Right ventricle myocardium inferior (tissue), 1 donor: ENCODE measurements at regions of chr10 and their contacts with region 1.

Region 1: DNA sequence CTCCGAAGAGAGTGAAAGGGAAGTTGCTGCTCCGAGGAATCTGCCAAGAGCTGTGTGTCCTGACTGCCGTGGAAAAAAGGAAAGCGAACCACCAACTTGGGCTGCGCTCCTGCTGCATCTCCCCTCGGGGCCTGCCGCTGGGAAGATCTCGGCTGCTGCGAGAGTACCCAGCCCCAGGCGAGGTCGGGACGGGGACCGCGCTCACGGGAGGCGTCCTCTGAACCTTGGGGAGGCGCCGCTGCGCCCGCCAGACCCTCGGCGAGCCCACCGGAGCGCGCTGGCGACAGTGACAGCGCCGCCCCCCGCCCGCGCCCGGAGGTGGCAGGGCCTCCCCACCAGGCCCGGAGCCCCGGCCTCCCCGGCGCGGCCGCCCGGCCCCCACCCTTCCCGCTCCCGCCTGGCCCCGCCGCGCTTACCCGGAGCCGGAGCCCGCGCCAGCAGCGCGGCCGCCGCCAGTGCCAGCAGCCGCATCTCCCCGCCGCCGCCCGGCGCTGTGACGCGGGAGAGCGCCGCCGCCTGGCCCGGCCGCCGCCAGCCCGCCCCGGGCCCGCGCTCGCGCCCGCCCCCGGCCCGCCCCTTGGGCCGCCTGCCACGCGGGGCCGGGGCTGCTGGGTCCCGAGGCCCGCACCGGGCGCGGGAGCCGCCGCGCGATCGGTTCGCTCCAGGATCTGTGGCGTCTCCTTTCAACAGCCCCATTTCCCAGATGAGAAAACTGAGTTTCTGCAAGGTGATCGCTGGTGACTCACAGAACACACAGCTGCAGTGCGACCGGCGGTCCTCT is at the start of gene VSTM4:
- DNase-seq: peak; percentile 72
- ATAC-seq: peak; percentile 62
- total RNA-seq, gene VSTM4: 21.8 TPM

Region 2: DNA sequence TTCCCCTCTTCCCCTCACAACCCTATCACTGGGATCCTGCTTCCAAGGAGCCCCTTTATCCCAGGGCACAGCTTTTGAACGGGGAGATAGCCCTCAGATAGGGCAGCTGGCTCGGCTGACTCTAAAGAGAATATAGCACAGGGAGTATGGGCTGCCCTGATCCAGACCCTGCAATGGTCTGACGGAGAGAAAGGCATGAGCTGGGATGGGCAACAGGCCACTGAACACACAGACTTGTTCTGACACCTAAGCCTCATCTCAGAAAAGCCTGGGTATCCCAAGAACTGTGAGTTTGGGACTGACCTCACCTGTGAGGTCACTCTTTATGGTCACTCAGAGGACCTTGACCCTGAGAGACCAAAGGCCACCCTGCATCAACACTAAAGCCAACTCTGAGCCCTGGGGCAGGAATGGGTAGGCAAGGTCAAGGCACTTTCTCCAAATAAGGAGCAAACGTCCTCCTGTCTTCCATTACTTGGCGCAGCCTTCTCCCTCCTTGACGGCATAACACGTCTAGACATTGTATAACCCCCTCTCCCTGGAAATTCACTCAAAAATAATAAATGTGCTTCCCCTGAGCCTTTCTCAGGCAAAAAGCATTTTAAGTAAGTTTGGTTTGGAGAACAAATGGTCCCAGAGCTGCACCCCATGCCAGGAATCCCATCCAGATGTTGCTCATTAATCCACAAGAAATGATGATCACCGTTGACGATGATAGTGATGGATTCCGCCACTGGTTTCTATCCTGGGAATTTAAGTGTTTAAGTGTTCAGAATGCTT is 167.3 kb before region 1 on chr10:
- intact Hi-C with region 1: no loop called
- DNase-seq: no peak
- ATAC-seq: no peak

Region 3: GRCh38 chr10:48981310-48981907 is 133.8 kb before region 1 on chr10:
- intact Hi-C with region 1: loop called (anchors 5 kb)
- DNase-seq: no peak
- ATAC-seq: peak; percentile 86

Region 4: GRCh38 chr10:49009199-49009979 is 105.8 kb before region 1 on chr10:
- intact Hi-C with region 1: loop called (anchors 2 kb)
- DNase-seq: no peak
- ATAC-seq: peak; percentile 40

Region 5: DNA sequence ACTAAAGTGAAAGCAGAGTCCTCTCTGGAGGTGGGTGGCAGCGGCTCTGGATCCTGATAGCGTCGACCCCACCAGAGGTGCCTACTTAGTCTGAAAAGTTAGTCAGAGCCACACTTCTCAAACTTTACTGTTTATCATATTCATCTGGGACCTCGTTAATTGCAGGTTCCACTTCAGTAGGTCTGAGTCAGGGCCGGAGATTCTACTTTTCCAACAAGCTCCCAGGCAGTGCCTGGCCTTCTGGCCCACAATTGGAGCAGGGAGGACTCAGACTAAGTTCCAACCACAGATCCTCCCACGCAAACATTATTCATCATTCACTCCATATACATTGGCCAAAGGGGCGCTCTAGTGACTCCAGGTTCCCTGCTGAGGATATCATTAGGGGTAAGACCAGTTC is 78.0 kb before region 1 on chr10:
- intact Hi-C with region 1: no loop called
- DNase-seq: no peak
- ATAC-seq: no peak

Region 6: DNA sequence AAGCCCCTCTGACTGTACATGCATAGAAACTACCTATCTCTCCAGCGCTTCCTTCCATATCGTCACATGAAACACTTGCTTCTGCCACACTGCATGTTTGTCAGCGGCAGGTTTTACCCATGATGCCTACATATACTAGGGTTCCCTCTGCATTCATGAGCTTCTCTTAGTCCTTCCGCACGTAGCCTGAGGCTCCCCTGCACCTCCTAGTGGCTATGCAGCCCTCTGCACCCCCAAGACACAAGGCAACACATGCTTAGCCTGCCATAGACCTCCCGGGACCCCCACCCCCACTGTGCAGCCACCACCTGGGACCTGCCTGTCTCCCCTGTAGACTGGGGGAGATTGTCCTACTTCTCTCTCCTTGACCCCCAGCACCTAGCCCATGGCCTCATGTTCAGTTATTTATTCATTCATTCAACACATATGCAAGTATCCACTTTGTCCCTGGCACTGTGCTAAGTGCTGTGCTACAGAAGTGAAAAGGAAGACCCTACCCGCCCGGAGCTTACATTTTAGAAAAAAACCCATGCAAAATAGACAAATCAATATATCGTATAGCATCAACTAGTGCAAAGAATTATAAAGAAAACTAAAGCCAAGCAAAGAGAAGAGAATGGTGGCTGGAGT is 49.5 kb after region 1 on chr10:
- intact Hi-C with region 1: loop called (anchors 5 kb)
- DNase-seq: no peak
- ATAC-seq: peak; percentile 49

Region 7: GRCh38 chr10:49242604-49243003 is 127.4 kb after region 1 on chr10:
- intact Hi-C with region 1: no loop called
- DNase-seq: peak; percentile 75
- ATAC-seq: peak; percentile 78

Region 8: DNA sequence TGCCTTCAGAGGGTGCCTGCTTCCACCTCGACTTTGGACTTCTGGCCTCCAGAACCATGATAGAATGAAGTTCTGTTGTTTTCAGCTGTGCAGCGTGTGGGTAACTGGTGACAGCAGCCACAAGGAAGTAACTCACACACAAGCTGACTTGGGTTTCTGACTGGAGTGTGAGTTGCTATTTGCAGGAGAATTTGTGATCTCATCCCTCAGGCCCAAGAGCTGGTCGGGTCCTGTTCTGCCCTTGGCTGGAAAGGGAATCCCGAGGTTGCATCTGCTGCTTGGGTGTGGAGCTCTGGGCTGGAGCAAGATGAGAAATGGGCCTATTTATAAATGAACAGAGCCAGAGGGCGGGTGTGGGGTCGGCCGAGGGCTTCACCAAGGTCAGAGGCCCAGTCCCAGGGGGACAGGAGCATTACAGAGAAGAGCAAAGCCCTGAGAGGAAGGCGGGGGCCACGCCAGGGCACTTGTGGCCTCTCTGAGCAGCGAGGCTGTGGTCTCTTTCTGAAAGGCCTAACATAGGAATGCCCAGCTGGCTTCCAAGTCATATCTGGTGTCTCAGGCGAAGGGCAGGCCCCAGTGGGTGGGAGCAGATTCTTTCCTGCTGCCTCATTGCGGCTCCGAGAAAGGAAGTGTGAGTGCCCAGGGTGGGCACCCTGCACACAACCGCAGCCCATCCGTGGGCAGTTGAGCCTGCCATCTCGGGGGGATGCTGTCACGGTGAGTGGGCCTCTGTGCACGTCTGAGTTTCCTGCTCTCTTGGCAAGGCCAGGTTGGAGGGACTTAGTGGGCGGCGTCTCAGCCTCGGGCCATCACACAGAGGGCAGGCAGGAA is 157.3 kb after region 1 on chr10:
- intact Hi-C with region 1: loop called (anchors 10 kb)
- DNase-seq: peak; percentile 79
- ATAC-seq: peak; percentile 58